ENCODE measurements at regions of chr5 and their contacts with region 1.

Region 1: DNA sequence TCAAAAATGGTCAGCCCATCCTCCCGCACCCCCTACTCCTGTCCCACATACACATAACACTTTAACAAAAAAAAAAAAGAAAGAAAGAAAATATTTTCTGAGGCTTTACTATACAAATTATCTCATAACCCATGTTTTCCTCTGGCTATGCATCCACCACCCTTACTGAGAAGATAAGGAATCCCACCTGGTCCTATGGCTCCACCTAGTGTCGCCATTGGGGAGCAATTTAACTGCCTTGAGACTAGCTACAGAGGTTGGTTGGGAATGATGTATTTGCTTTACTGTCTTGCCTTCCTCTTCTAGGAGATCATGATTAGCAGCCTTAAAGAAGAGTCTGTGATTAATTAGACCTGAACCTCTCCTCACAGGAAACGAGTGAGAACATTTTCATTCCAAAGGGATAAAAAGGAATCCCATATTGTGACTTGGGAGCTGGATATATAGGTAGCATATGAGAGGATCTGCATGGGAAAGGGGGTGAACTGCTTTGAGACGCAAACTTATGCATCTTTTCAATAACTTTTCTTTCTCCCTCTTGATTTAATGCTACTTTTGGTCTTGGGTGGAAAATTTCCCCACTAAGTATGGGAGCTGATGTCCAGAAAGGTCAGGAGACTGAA is 77.7 kb upstream of the SELENOP start:
- DNase-seq: peak in 1 of 2 donors; percentile 89
- H3K4me3 ChIP-seq: no peak overlapping the region
- H3K27ac ChIP-seq: no peak overlapping the region
- H3K4me1 ChIP-seq: no peaks in the 10 kb centered on the region
- H3K27me3 ChIP-seq: no peaks in the 10 kb centered on the region
- CTCF ChIP-seq: peak; percentile 56 to 86 (median 77)

Region 2: DNA sequence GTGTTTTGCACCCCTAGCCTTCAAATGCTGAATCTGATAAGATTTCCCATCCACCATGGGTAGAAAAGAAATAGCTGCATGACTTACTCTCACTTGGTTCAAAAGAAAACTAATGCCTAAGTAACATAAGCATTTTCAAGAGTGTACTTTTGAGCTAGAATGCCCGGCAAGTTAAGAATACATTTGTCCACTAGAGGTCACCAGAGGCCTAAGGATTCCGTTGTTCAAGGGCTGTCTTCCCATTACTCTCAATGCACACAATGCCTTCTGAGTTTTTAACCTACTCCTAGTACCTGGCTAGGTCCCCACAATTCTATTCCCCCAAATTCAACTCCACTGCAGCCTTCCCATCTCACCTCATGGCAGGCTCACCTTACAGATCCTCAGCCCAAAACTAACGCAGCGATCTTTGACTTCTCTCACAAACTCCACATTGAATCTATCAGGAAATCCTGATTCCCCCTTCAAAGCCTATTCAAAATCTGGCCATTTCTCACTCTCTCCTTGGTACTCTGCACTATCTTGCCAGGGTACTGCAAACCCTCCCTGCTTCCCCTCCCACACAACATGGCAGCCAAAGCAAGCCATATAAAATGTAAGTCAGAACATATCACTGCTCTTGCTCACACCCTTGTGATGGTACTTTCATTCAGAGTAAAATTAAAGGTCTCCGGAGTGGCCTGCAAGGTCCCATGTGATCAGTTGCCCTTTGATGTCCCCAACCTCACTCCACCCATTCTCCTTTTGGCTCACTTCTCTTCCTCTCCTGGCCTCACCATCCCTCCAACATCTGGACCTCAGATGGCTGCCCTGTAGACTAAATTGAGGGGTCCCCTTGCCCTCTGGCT is 1032.6 kb before region 1 on chr5:
- intact Hi-C with region 1: loop called (anchors 5 kb)
- DNase-seq: peak in 1 of 2 donors; percentile 73
- H3K4me3 ChIP-seq: no peak overlapping the region
- H3K27ac ChIP-seq: peak overlapping the region in 1 of 2 donors; percentile 32
- H3K4me1 ChIP-seq: no peaks in the 10 kb centered on the region
- H3K27me3 ChIP-seq: no peaks in the 10 kb centered on the region
- CTCF ChIP-seq: peak; percentile 45 to 76 (median 72)

Region 3: GRCh38 chr5:42005561-42006153 is 883.8 kb before region 1 on chr5:
- intact Hi-C with region 1: loop called (anchors 10 kb)
- DNase-seq: no peak
- H3K4me3 ChIP-seq: no peak overlapping the region
- H3K27ac ChIP-seq: no peak overlapping the region
- H3K4me1 ChIP-seq: no peaks in the 10 kb centered on the region
- H3K27me3 ChIP-seq: no peaks in the 10 kb centered on the region
- CTCF ChIP-seq: peak; percentile 4 to 64 (median 59)

Region 4: GRCh38 chr5:42423285-42424165 is 465.9 kb before region 1 on chr5 and contains the start of gene GHR:
- intact Hi-C with region 1: loop called (anchors 2 kb)
- DNase-seq: peak in 1 of 2 donors; percentile 91
- H3K4me3 ChIP-seq: peak within 1 kb of the TSS; percentile 68 to 73
- H3K27ac ChIP-seq: peak within 1 kb of the TSS; percentile 69 to 77
- H3K4me1 ChIP-seq: peaks cover 0 to 4% of the 10 kb centered on the region in 2 donors
- H3K27me3 ChIP-seq: no peaks in the 10 kb centered on the region
- CTCF ChIP-seq: peak; percentile 69 to 83 (median 79)
- total RNA-seq, gene GHR: 6.4 TPM

Region 5: DNA sequence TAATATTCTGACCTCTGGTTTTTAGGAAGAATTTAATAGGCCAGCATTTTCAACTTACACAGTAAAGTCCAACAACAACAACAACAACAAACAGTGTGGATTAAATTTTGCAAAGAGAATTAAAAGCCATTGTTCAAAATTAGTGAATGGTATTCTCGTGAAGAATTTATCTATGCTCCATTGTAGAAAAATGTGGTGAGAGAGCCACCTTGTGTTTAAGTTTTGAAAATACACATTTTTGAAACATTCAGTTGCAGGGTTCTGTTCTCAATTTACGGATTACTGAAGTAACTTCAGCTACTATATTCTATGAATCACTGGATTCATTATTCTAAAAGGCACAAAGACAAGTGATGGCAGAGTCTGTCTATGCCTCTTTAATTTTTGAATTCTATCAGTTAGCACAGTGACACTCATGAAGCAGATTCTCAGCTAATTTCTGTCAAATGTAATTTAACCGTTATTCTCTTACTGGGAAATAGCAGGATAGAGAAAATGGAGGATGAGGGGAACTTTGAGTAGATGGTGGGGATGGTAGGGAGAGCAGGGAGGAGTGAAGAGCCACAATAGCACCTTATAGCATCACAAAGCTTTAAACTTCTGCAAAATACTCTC is 121.8 kb before region 1 on chr5:
- intact Hi-C with region 1: loop called (anchors 5 kb)
- DNase-seq: no peak
- H3K4me3 ChIP-seq: no peak overlapping the region
- H3K27ac ChIP-seq: no peak overlapping the region
- H3K4me1 ChIP-seq: no peaks in the 10 kb centered on the region
- H3K27me3 ChIP-seq: no peaks in the 10 kb centered on the region
- CTCF ChIP-seq: peak; percentile 23 to 67 (median 35)

Region 6: DNA sequence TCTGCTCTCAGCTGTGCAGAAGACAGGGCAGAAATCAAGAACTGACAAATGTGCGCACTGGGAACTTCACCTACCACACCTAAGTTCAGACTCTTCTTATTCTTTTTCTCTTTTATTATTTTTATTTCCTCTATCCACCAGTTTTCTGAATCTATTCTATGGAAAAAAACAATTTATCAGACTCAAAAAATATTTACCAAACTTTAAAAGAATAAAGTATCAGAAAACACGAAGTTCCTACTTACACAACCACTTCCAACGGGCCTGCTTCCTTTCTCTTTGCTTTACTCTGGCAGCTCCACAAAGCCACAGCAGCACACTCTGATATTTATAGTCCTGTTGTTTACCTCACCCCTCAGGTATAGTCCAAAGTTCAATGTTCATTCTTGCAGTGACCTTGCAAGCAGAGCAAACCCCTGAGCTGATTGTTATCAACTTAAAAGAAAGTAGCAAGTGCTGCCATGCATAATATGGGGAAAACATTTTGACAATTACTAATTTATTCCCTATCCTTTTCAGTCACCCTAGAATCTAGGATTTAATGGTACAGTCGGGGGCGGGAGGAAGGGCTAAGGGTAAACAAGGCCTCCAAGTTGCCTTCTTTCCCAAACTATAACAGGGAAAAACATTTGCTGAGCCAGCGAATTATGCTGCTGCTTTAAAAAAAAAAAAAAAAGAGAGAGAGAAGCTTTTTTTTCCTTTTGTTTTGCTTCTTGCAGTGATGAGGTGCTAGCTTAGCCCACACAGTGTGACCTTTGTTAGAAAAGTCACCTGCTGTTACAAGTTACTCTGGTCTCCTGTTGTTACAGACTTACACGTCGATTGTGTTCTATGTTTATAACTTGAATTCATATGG is 77.6 kb before region 1 on chr5 and contains the start of gene SELENOP:
- intact Hi-C with region 1: loop called (anchors 10 kb)
- DNase-seq: peak in 1 of 2 donors; percentile 70
- H3K4me3 ChIP-seq: peak within 1 kb of the TSS; percentile 46 to 65
- H3K27ac ChIP-seq: peak within 1 kb of the TSS; percentile 64 to 72
- H3K4me1 ChIP-seq: peaks cover 0 to 4% of the 10 kb centered on the region in 2 donors
- H3K27me3 ChIP-seq: no peaks in the 10 kb centered on the region
- CTCF ChIP-seq: no peak
- total RNA-seq, gene SELENOP: 119 TPM

Region 7: DNA sequence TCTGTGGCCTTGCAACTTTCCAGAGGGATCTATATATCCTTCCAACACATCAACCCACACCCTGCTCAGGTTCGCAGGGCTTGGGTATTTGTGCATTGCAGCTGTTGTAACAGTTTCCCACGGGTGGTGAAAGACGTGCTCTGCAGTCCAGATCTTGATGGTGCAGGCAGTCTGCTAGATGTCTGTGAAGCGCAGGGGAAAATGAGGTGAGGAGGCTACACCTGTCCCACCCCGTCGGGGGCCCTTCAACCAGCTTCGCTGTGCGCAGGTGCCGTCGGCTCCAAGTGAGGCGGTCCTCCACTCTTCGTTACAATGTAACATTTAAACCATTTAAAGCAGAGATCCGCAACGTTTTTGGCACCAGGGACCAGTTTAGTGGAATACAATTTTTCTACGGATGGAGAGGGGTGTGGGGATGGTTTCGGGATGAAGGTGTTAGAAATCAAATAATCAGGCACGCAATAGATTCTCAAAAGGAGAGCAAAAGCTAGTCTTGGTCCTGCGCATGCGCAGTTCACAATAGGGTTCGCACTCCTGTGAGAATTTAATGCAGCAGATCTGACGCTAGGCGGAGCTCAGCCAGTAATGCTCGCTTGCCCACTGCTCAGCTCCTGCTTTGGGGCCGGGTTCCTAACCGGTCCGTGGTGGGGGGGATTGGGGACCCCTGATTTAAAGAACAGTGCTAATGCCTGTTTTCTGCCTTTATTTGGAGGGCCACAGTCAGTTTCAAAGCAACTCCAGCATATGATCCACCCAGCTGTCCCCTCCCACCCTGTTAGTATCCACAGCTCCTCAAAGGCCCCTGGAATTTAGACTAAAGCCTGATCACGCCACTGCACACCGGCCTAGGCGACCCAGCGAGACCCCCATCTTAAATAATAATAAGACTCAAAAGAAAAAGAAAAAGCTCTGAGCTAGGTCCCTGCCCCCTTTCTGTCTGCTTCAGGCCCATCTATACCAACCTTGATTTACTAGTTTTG is 19.4 kb after region 1 on chr5:
- intact Hi-C with region 1: no loop called
- DNase-seq: peak; percentile 50 to 94
- H3K4me3 ChIP-seq: peak overlapping the region; percentile 49 to 63
- H3K27ac ChIP-seq: no peak overlapping the region
- H3K4me1 ChIP-seq: peaks cover 0 to 5% of the 10 kb centered on the region in 2 donors
- H3K27me3 ChIP-seq: no peaks in the 10 kb centered on the region
- CTCF ChIP-seq: peak; percentile 76 to 87 (median 78)

Region 8: GRCh38 chr5:42992091-42992879 is 102.9 kb after region 1 on chr5:
- intact Hi-C with region 1: no loop called
- DNase-seq: peak; percentile 68 to 93
- H3K4me3 ChIP-seq: peak overlapping the region; percentile 72 to 76
- H3K27ac ChIP-seq: peak overlapping the region; percentile 90 to 97
- H3K4me1 ChIP-seq: peaks cover 0 to 4% of the 10 kb centered on the region in 2 donors
- H3K27me3 ChIP-seq: no peaks in the 10 kb centered on the region
- CTCF ChIP-seq: no peak

Region 9: DNA sequence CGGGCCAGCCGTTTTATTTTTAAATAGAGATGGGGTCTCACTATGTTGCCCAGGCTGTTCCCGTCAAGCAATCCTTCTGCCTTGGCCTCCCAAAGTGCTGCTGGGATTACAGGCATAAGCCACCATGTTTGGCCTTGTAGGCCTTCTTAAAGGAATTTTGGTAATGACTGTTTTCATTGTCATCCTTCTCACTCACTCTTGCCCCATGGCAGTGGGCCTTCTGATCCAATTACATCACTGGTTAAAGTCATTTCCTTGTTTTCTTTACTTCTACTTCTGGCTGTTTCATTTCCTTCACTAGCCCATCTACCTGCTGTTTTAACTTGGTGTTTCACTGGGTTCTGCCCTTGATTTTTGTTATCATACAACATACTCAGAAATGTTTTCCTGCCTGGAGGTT is 282.5 kb after region 1 on chr5:
- intact Hi-C with region 1: no loop called
- DNase-seq: no peak
- H3K4me3 ChIP-seq: no peak overlapping the region
- H3K27ac ChIP-seq: no peak overlapping the region
- H3K4me1 ChIP-seq: no peaks in the 10 kb centered on the region
- H3K27me3 ChIP-seq: no peaks in the 10 kb centered on the region
- CTCF ChIP-seq: no peak